Calu3 (cell line): ENCODE measurements at regions of chr2 and their contacts with region 1.

Region 1: DNA sequence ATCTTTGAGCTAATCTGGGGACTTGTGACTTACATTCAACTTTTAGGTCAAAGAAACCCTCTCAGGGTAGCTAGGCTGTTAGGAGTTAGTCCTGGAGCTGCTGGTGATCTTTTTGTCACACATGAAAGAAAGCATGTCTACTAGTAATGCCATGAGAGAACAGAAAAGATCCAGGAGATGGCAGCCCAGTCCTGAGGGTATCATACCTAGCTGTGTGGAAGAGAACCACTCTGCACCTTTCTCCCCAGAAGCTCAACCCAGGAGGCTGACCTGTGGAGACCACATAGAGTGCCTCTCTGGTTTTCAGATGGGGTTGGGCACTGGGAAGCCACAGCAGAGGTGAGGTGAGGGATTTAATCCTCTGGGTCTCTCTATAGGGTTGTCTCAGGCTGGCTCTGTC is 460.2 kb upstream of the UBE2E3 start:
- DNase-seq: peak; percentile 32
- H3K4me3 Mint-ChIP-seq: no peak overlapping the region
- H3K27ac Mint-ChIP-seq: no peak overlapping the region
- H3K4me1 Mint-ChIP-seq: peaks cover 93% of the 10 kb centered on the region
- H3K27me3 Mint-ChIP-seq: no peaks in the 10 kb centered on the region
- CTCF ChIP-seq: no peak

Region 2: GRCh38 chr2:180291060-180291459 is 229.1 kb before region 1 on chr2:
- CTCF ChIA-PET with region 1: no interaction called
- intact Hi-C with region 1: loop called (anchors 5 kb)
- DNase-seq: no peak
- H3K4me3 Mint-ChIP-seq: peak overlapping the region; percentile 42
- H3K27ac Mint-ChIP-seq: peak overlapping the region; percentile 80
- H3K4me1 Mint-ChIP-seq: peaks cover 50% of the 10 kb centered on the region
- H3K27me3 Mint-ChIP-seq: no peaks in the 10 kb centered on the region
- CTCF ChIP-seq: no peak

Region 3: GRCh38 chr2:180411661-180412060 is 108.5 kb before region 1 on chr2:
- CTCF ChIA-PET with region 1: no interaction called
- intact Hi-C with region 1: loop called (anchors 2 kb)
- DNase-seq: peak; percentile 30
- H3K4me3 Mint-ChIP-seq: peak overlapping the region; percentile 40
- H3K27ac Mint-ChIP-seq: peak overlapping the region; percentile 83
- H3K4me1 Mint-ChIP-seq: peaks cover 29% of the 10 kb centered on the region
- H3K27me3 Mint-ChIP-seq: no peaks in the 10 kb centered on the region
- CTCF ChIP-seq: no peak

Region 4: GRCh38 chr2:180656455-180656847 is 136.2 kb after region 1 on chr2:
- CTCF ChIA-PET with region 1: interaction called, 7 read pairs
- intact Hi-C with region 1: loop called (anchors 5 kb)
- DNase-seq: peak; percentile 42
- H3K4me3 Mint-ChIP-seq: no peak overlapping the region
- H3K27ac Mint-ChIP-seq: peak overlapping the region; percentile 56
- H3K4me1 Mint-ChIP-seq: peaks cover 49% of the 10 kb centered on the region
- H3K27me3 Mint-ChIP-seq: no peaks in the 10 kb centered on the region
- CTCF ChIP-seq: no peak